ENCODE measurements at regions of chr1 and their contacts with region 1.

Region 1: DNA sequence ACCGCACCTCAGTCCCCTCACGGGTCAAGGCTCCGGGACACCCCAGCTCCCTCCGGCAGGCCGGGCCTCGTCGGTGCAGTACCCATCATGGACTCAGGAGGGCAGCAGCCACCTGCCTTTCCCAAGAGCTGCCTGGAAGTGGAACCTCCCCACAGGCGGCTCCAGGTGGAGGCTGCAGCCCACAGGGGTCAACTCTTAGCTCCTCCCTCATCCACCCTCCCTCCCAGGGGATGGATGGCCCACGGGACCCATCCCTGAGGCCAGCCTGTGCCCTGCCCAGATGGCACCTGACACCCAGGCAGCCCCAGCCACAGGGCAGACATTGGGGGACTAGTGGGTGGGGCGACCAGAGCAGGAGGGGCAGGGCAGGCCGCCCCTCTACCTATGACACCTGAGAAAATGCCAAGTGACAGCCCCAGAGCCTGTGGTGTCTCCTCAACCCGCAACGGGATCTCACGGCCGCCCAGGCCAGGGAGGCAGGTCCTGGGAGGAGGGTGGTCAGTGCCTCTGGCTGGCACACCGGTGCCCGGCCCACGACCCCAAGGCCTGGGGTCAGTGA is 1.2 kb upstream of the ARHGEF16 start:
- DNase-seq: peak; percentile 49 to 99
- H3K4me3 ChIP-seq: peak overlapping the region in 1 of 4 experiments; percentile 53; a peak in 1 of 8 replicates
- H3K27ac ChIP-seq: no peak overlapping the region
- H3K4me1 ChIP-seq: peaks cover 0 to 20% (median 16%) of the 10 kb centered on the region in 4 experiments; a peak in 6 of 7 replicates
- H3K27me3 ChIP-seq: peaks cover 0 to 3% (median 0%) of the 10 kb centered on the region in 4 experiments; a peak in 2 of 7 replicates
- CTCF ChIP-seq: peak in 2 of 3 experiments; percentile 94 to 98; a peak in 3 of 4 replicates
- EP300 ChIP-seq: no peak
- POLR2A ChIP-seq: no peak
- RAD21 ChIP-seq: peak; percentile 97 to 98

Region 2: DNA sequence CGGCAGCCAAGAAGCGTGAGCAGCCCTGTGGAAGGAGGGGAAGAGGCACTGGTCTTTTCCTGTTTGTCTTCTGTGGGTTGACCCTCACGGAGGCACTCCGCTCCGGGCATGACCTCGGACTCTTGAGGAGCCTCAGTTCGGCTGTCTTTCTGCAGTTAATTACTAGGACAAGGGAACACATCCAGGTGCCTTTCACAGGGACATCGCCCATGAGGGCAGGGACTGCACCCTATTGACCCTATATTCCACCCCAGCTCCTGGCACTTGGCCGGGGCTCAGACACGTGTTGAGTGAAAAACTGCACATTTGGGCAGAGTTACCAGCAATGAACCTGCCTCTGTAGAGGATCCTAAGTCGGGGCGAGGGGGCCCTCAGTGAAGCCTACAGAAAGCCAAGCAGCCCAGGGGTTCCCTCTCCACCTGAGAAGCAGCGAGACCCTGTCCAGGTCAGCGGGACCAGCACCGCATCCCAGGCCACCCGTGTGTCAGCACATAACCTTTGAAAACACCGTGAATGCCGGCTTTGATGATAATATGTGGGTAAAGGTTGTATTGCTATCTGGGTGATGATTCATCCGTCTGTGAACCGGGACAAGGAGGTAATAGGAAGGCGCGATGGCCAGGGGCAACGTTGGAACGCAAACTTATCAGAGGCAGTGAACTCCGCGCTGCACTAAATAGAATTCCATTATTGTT is 160.3 kb before region 1 on chr1:
- CTCF ChIA-PET with region 1: no interaction called
- POLR2A ChIA-PET with region 1: no interaction called
- DNase-seq: no peak
- H3K4me3 ChIP-seq: no peak overlapping the region
- H3K27ac ChIP-seq: no peak overlapping the region
- H3K4me1 ChIP-seq: no peaks in the 10 kb centered on the region; a peak in 1 of 7 replicates
- H3K27me3 ChIP-seq: no peaks in the 10 kb centered on the region
- CTCF ChIP-seq: no peak
- EP300 ChIP-seq: no peak
- POLR2A ChIP-seq: no peak
- RAD21 ChIP-seq: no peak

Region 3: GRCh38 chr1:3306583-3307291 is 146.5 kb before region 1 on chr1:
- CTCF ChIA-PET with region 1: no interaction called
- POLR2A ChIA-PET with region 1: no interaction called
- DNase-seq: no peak
- H3K4me3 ChIP-seq: no peak overlapping the region
- H3K27ac ChIP-seq: no peak overlapping the region
- H3K4me1 ChIP-seq: no peaks in the 10 kb centered on the region; a peak in 1 of 7 replicates
- H3K27me3 ChIP-seq: peaks cover 0 to under 1% (median 0%) of the 10 kb centered on the region in 4 experiments; a peak in 3 of 7 replicates
- CTCF ChIP-seq: no peak
- EP300 ChIP-seq: no peak
- POLR2A ChIP-seq: no peak
- RAD21 ChIP-seq: no peak

Region 4: DNA sequence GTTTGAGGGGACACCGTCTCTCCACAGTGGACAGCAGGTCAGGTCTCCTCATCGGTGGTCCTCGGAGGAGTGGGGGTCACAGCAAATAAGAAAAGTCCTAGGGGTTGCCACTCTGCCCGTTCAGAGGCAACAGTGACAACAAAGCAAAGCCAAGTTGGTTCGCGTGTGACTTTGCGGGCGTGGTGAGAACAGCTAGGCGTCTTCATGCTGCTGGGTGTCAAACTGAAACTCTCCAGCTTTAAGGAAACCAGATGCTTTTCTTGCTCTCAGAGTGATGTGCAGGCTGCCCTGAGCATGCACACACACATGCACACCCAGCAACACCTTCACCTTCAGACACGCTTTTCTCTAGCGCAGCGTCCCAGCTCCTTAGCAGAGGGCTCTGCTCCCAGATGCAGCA is 68.9 kb before region 1 on chr1:
- CTCF ChIA-PET with region 1: no interaction called
- POLR2A ChIA-PET with region 1: no interaction called
- DNase-seq: no peak
- H3K4me3 ChIP-seq: no peak overlapping the region
- H3K27ac ChIP-seq: no peak overlapping the region
- H3K4me1 ChIP-seq: no peaks in the 10 kb centered on the region
- H3K27me3 ChIP-seq: peaks cover 0 to 26% (median 0%) of the 10 kb centered on the region in 4 experiments; a peak in 3 of 7 replicates
- CTCF ChIP-seq: no peak
- EP300 ChIP-seq: no peak
- POLR2A ChIP-seq: no peak
- RAD21 ChIP-seq: no peak

Region 5: GRCh38 chr1:3431266-3431665 is 22.0 kb before region 1 on chr1:
- CTCF ChIA-PET with region 1: interaction called, 15 read pairs
- POLR2A ChIA-PET with region 1: no interaction called
- DNase-seq: no peak
- H3K4me3 ChIP-seq: no peak overlapping the region
- H3K27ac ChIP-seq: no peak overlapping the region
- H3K4me1 ChIP-seq: peaks cover 0 to 7% (median 1%) of the 10 kb centered on the region in 4 experiments; a peak in 3 of 7 replicates
- H3K27me3 ChIP-seq: no peaks in the 10 kb centered on the region
- CTCF ChIP-seq: peak in 2 of 3 experiments; percentile 60 to 74; a peak in 3 of 4 replicates
- EP300 ChIP-seq: no peak
- POLR2A ChIP-seq: no peak
- RAD21 ChIP-seq: peak in 1 of 2 experiments; percentile 37; a peak in 3 of 4 replicates

Region 6: DNA sequence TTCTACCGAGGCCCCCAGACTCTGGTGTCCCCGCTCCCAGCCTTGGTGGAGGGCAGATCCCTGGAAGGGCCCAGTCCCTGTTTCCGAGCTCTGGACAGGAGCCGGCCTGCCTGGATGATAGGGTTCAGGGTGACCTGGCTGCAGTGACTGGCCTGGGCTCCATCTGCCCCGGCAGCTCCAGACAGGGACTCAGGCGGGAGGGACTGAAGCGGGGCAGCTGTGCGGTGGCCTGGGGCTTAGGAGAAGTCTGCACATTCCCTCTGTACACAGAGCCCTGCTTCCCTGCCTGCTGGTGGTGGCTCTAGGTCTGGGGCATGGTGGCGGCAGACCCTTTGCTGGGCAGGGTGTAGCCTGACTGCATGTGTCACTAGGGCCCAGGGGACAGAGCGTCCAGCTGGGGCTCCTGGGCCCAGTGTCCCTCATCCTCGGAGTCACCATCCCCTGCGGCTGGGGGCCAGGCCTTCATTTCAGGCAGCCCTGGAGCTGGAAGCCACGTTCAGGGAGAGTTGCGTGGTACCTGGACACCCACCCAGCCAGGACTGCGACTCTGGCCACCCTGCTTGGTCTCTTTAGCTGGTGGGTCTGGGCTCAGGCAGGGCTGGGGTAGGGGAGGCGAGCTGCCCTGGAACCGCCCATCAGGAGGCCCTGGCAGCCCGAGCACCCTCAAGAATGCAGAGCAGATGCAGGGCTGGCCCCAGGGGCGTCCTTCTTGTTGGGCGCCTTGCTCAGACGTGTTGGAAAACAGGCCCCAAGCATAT is 10.8 kb after region 1 on chr1:
- CTCF ChIA-PET with region 1: interaction called, 23 read pairs
- POLR2A ChIA-PET with region 1: interaction called, 4 read pairs
- DNase-seq: no peak
- H3K4me3 ChIP-seq: no peak overlapping the region
- H3K27ac ChIP-seq: no peak overlapping the region; the same call in 1 of the 2 replicates
- H3K4me1 ChIP-seq: no peaks in the 10 kb centered on the region
- H3K27me3 ChIP-seq: no peaks in the 10 kb centered on the region
- CTCF ChIP-seq: no peak
- EP300 ChIP-seq: no peak
- POLR2A ChIP-seq: no peak
- RAD21 ChIP-seq: no peak

Region 7: GRCh38 chr1:3477241-3477995 is 24.1 kb after region 1 on chr1:
- CTCF ChIA-PET with region 1: interaction called, 41 read pairs
- POLR2A ChIA-PET with region 1: interaction called, 26 read pairs
- DNase-seq: no peak
- H3K4me3 ChIP-seq: no peak overlapping the region
- H3K27ac ChIP-seq: no peak overlapping the region
- H3K4me1 ChIP-seq: peaks cover 0 to under 1% (median 0%) of the 10 kb centered on the region in 4 experiments; a peak in 2 of 7 replicates
- H3K27me3 ChIP-seq: no peaks in the 10 kb centered on the region
- CTCF ChIP-seq: no peak
- EP300 ChIP-seq: no peak
- POLR2A ChIP-seq: no peak
- RAD21 ChIP-seq: no peak

Region 8: DNA sequence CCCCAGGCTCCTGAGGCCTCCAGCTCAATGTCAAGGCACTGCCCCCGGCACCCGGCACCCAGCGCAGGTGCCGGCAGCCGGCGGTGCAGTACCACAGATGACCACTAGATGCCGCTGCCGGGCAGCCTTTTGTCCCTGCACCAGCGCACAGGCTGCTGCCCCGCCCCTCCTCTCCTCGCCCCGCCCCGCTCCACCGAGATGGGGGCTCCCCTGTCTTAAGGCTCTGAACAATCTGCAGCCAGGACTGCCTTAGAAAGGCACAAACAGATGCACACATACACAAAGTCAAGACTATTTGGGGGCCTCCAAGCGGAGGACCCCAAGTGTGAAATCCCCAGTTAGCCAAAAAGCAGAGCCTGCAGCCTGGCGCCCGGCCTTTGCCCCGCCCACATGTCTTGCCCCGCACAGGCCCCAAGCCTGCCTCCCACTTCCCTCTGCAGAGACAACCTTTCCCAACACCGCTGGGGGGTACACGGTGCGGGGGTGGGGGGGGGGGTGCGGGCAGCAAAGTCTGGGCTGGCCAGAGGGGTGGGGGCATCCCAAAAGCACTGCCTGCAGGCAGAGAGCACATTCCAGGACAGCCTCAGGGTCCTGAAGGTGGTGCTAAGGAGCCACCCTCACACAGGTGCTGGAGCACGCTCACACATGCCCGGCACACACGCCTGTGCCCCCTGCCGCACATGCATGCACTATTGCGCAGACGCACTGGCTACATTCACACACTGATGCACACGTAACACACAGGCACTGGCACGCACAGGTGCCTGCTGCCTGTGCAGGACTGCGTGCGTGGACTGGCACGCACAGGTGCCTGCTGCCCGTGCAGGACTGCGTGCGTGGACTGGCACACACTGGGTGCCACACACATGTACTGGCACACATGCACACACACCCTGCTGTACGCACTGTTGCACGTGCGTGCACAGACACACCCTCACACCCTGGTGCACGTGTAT is 38.3 kb after region 1 on chr1:
- CTCF ChIA-PET with region 1: interaction called, 59 read pairs
- POLR2A ChIA-PET with region 1: interaction called, 13 read pairs
- DNase-seq: peak; percentile 44 to 97
- H3K4me3 ChIP-seq: peak overlapping the region in 1 of 4 experiments; percentile 53; a peak in 2 of 8 replicates
- H3K27ac ChIP-seq: no peak overlapping the region; the same call in 1 of the 2 replicates
- H3K4me1 ChIP-seq: peaks cover 0 to 4% (median 0%) of the 10 kb centered on the region in 4 experiments; a peak in 2 of 7 replicates
- H3K27me3 ChIP-seq: no peaks in the 10 kb centered on the region
- CTCF ChIP-seq: peak in 2 of 3 experiments; percentile 78 to 93; a peak in 3 of 4 replicates
- EP300 ChIP-seq: no peak
- POLR2A ChIP-seq: no peak
- RAD21 ChIP-seq: peak; percentile 81 to 88

Region 9: GRCh38 chr1:3543076-3544039 is 90.1 kb after region 1 on chr1:
- CTCF ChIA-PET with region 1: interaction called, 10 read pairs
- POLR2A ChIA-PET with region 1: interaction called, 3 read pairs
- DNase-seq: peak in 1 of 2 experiments; percentile 71
- H3K4me3 ChIP-seq: no peak overlapping the region
- H3K27ac ChIP-seq: no peak overlapping the region
- H3K4me1 ChIP-seq: peaks cover 0 to 17% (median 4%) of the 10 kb centered on the region in 4 experiments; a peak in 5 of 7 replicates
- H3K27me3 ChIP-seq: peaks cover 0 to 6% (median 0%) of the 10 kb centered on the region in 4 experiments; a peak in 1 of 7 replicates
- CTCF ChIP-seq: no peak
- EP300 ChIP-seq: no peak
- POLR2A ChIP-seq: no peak
- RAD21 ChIP-seq: no peak

Region 10: DNA sequence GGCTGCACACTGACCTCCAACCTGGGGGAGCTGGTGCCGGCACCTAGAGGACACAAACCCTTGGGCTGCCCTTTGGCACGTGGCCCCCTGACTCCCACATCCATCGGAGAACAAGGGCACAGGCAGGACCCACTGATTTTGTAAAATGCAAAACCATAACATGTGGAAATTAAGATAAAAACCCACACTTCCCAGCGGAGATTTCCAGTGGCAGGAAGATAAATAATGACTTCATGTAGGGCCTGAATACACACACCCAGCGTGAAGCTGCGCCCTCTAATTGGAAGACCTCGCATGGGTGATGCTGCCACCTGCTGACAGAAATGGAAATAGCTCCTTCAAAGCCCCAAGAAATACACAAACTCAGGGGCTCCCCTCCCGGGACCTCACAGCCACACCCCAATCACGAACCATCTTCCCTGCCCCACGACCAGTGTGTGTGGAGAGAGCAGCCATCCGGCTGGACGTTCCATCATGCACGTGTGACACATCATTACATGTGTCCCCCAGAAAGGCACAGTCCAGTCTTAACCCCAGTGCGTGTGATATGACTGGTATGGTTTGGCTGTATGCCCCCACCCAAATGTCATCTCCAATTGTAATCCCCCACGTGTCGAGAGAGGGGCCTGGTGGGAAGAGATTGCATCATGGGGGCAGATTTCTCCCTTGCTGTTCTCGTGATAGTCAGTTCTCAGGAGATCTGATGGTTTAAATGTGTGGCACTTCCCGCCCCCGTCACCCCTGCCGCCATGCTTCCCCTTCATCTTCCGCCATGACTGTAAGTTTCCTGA is 165.8 kb after region 1 on chr1:
- CTCF ChIA-PET with region 1: interaction called, 52 read pairs
- POLR2A ChIA-PET with region 1: interaction called, 3 read pairs
- DNase-seq: peak in 1 of 2 experiments; percentile 89
- H3K4me3 ChIP-seq: no peak overlapping the region
- H3K27ac ChIP-seq: no peak overlapping the region
- H3K4me1 ChIP-seq: peaks cover 0 to 11% (median 4%) of the 10 kb centered on the region in 4 experiments; a peak in 5 of 7 replicates
- H3K27me3 ChIP-seq: no peaks in the 10 kb centered on the region; a peak in 1 of 7 replicates
- CTCF ChIP-seq: peak in 2 of 3 experiments; percentile 79 to 93; a peak in 3 of 4 replicates
- EP300 ChIP-seq: no peak
- POLR2A ChIP-seq: no peak
- RAD21 ChIP-seq: peak; percentile 63 to 75